ENCODE measurements at regions of chr16 and their contacts with region 1.

Region 1: GRCh38 chr16:30615358-30616091 is 5.3 kb upstream of the ZNF689 start:
- DNase-seq: peak; percentile 82 to 100
- H3K4me3 ChIP-seq: no peak overlapping the region
- H3K27ac ChIP-seq: no peak overlapping the region
- H3K4me1 ChIP-seq: peaks cover 0 to 3% (median under 1%) of the 10 kb centered on the region in 4 experiments; a peak in 1 of 7 replicates
- H3K27me3 ChIP-seq: no peaks in the 10 kb centered on the region; a peak in 2 of 7 replicates
- CTCF ChIP-seq: peak; percentile 99 to 100 (median 100)
- EP300 ChIP-seq: no peak
- POLR2A ChIP-seq: no peak
- RAD21 ChIP-seq: peak; percentile 99

Region 2: DNA sequence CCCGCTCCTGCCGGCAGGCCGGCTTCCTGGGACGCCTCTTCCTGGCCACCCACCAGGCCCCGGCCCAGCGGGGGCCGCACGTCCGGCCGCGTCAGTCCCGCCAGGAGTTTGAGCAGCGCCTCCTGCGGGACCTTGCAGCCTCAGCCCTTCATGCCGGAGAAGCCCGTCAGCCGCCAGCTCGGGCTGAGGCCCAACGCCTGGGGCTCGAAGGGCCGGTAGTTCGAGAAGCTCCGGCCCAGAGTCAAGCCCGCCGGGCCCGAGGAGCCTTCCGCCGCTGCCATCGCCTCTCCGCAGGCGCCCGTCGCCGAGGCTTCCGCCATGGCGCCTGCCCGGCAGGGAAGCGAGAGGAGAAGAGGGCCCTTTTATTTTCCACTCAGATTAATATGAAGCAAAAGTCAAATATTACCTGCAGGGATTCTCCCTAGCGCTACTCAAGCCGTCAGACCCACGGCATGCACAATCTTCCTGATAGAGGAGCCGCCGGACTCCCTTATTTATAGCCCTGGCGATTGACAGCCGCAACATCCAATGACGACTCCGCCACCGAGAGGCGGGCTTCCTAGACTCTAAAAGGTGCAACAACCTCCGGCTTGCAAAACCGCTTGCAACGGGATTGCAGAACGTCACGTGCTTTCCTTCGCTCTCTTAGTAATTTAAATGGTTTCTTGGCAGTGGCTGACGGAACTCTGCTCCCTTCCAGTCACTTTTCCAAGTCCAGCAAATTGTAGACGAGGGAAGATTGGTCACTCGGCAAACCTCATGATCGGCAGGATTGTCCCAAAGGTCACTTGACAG is 169.9 kb before region 1 on chr16 and contains the start of gene SEPHS2:
- CTCF ChIA-PET with region 1: interaction called, 18 read pairs
- POLR2A ChIA-PET with region 1: interaction called, 4 read pairs
- DNase-seq: peak; percentile 96 to 97
- H3K4me3 ChIP-seq: peak within 1 kb of the TSS; percentile 71 to 86 (median 78)
- H3K27ac ChIP-seq: peak within 1 kb of the TSS; percentile 44; the same call in 1 of the 2 replicates
- H3K4me1 ChIP-seq: peaks cover 0 to 9% (median 6%) of the 10 kb centered on the region in 4 experiments; a peak in 5 of 7 replicates
- H3K27me3 ChIP-seq: peaks cover 0 to 4% (median 1%) of the 10 kb centered on the region in 4 experiments; a peak in 1 of 7 replicates
- CTCF ChIP-seq: peak; percentile 28 to 39 (median 33); a peak in 3 of 4 replicates
- EP300 ChIP-seq: no peak
- POLR2A ChIP-seq: peak; percentile 65 to 88
- RAD21 ChIP-seq: no peak; a peak in 2 of 4 replicates
- total RNA-seq, gene SEPHS2: 61.8 and 62.0 TPM in 2 replicates

Region 3: GRCh38 chr16:30534368-30535105 is 81.0 kb before region 1 on chr16 and contains the start of gene ZNF747:
- CTCF ChIA-PET with region 1: interaction called, 12 read pairs
- POLR2A ChIA-PET with region 1: interaction called, 32 read pairs
- DNase-seq: peak; percentile 70 to 91
- H3K4me3 ChIP-seq: peak within 1 kb of the TSS; percentile 61 to 85 (median 70)
- H3K27ac ChIP-seq: peak within 1 kb of the TSS; percentile 94
- H3K4me1 ChIP-seq: peaks cover 0 to 8% (median 3%) of the 10 kb centered on the region in 4 experiments; a peak in 3 of 7 replicates
- H3K27me3 ChIP-seq: no peaks in the 10 kb centered on the region
- CTCF ChIP-seq: no peak
- EP300 ChIP-seq: no peak
- POLR2A ChIP-seq: peak in 1 of 2 experiments; percentile 81; a peak in 2 of 3 replicates
- RAD21 ChIP-seq: 0 out of 4 replicates have a peak, but pooled peaks of 1 of the 2 experiments have one; percentile 9
- total RNA-seq, gene ZNF747: 10.3 and 12.0 TPM in 2 replicates

Region 4: DNA sequence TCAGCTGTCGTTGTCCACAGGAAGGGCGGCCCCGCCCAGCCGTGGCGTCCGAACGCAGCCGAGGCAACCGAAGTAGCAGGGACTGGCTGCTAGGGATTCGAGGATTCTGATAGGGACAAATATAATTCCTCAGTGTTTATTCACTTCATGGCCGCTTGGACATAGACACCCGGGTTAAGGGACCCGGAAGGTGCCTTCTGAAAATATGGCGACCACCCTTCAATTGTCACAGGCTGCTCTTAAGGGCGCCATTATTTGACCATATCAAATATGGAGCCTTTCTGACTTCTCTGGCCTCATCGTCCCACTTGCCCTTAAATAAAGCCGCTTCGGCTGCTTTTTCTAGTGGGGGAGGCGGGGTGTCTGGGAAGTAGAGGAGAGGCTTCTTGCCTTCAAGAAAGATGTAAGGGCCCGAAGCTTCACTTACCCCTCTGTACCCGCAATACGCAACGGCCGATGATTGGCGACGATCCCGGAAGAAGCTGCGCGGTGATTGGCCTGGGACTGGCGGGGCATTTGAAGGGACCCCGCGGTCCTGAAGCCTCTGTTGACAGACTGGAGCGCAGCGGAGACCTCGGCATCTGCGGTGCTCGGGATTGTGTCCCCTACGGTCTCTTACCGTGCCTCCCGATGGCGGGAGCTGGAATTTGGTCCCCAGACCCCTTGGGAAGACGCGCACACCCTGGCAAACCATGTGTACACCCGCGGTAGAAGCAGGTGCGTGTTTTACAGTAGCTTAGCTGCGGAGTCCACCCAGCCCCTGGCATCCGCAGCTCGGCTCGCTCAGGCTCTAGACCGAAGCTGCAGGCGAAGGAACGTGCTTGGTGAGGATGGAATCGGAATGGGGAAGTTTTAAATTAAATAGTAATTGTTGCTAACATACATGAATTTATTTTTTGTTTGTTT is 43.6 kb before region 1 on chr16 and contains the start of gene ZNF688:
- CTCF ChIA-PET with region 1: interaction called, 15 read pairs
- POLR2A ChIA-PET with region 1: interaction called, 27 read pairs
- DNase-seq: peak; percentile 90 to 91
- H3K4me3 ChIP-seq: peak within 1 kb of the TSS; percentile 78 to 89 (median 82)
- H3K27ac ChIP-seq: peak within 1 kb of the TSS; percentile 64; the same call in 1 of the 2 replicates
- H3K4me1 ChIP-seq: peaks cover 0 to 9% (median 2%) of the 10 kb centered on the region in 4 experiments; a peak in 5 of 7 replicates
- H3K27me3 ChIP-seq: no peaks in the 10 kb centered on the region
- CTCF ChIP-seq: no peak
- EP300 ChIP-seq: no peak
- POLR2A ChIP-seq: peak in 1 of 2 experiments; percentile 42
- RAD21 ChIP-seq: no peak
- total RNA-seq, gene ZNF688: 3.5 and 3.7 TPM in 2 replicates

Region 5: GRCh38 chr16:30602616-30603277 is 12.8 kb before region 1 on chr16:
- CTCF ChIA-PET with region 1: interaction called, 38 read pairs
- POLR2A ChIA-PET with region 1: interaction called, 85 read pairs
- DNase-seq: no peak
- H3K4me3 ChIP-seq: no peak overlapping the region
- H3K27ac ChIP-seq: no peak overlapping the region
- H3K4me1 ChIP-seq: no peaks in the 10 kb centered on the region
- H3K27me3 ChIP-seq: no peaks in the 10 kb centered on the region
- CTCF ChIP-seq: no peak
- EP300 ChIP-seq: no peak
- POLR2A ChIP-seq: no peak
- RAD21 ChIP-seq: no peak

Region 6: DNA sequence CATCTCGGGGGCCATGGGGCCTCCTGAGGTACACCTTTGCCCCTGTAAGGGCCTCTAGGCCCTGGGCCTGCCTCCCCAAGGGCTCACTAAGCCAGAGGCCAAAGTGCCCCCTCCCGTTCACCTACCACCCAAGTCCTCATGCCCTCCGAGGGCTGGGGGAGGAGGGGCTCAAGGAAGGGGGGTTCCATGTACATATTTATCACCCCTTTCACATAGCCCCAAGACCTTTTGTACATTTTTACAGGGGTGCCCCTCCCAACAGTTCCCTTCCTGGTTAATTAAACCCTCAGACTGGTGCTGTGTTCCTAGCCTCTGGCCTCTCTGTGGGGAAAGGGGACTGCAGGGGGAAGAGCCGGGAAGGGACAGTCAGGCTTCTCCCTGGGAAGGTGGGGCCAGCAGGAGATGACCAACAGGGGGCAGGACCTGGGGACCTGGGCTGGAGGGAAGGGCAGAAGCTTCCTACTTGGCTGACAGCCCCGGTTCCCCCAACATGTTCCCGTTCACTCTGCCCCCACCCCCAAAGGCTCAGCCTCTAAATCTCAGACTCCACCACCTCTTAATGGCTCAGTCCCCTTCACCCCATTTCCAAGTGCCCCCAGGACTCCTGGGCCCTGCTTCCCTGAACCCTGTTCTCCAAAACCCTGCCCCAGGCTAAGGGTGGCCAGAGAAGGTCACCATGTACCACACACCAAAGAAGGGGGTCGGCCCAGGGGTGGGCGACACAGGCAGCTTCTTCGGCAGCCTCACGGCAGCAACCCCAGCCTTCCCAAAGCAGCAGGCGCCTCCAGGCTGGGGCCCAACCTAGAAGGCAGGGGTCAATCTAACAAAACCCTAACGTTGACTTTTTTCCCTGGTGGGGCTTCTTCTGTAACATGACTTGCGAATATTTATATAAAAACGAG is 54.6 kb after region 1 on chr16:
- CTCF ChIA-PET with region 1: no interaction called
- POLR2A ChIA-PET with region 1: no interaction called
- DNase-seq: no peak
- H3K4me3 ChIP-seq: no peak overlapping the region
- H3K27ac ChIP-seq: no peak overlapping the region
- H3K4me1 ChIP-seq: no peaks in the 10 kb centered on the region
- H3K27me3 ChIP-seq: peaks cover 51 to 96% (median 79%) of the 10 kb centered on the region in 4 experiments
- CTCF ChIP-seq: peak in 1 of 3 experiments; percentile 13; a peak in 1 of 4 replicates
- EP300 ChIP-seq: no peak
- POLR2A ChIP-seq: no peak
- RAD21 ChIP-seq: no peak

Region 7: GRCh38 chr16:30805370-30806169 is 190.0 kb after region 1 on chr16:
- CTCF ChIA-PET with region 1: no interaction called
- POLR2A ChIA-PET with region 1: no interaction called
- DNase-seq: peak in 1 of 2 experiments; percentile 84
- H3K4me3 ChIP-seq: peak overlapping the region; percentile 60 to 78 (median 68)
- H3K27ac ChIP-seq: no peak overlapping the region
- H3K4me1 ChIP-seq: peaks cover 0 to 6% (median 4%) of the 10 kb centered on the region in 4 experiments; a peak in 4 of 7 replicates
- H3K27me3 ChIP-seq: peaks cover 0 to 18% (median 11%) of the 10 kb centered on the region in 4 experiments; a peak in 6 of 7 replicates
- CTCF ChIP-seq: no peak
- EP300 ChIP-seq: no peak; a peak in 1 of 3 replicates
- POLR2A ChIP-seq: peak in 1 of 2 experiments; percentile 86; a peak in 2 of 3 replicates
- RAD21 ChIP-seq: no peak

Measured in H1 (cell line).